Posterior cingulate gyrus (tissue), 11 donors: ENCODE measurements at regions of chr1 and their contacts with region 1.

Region 1: DNA sequence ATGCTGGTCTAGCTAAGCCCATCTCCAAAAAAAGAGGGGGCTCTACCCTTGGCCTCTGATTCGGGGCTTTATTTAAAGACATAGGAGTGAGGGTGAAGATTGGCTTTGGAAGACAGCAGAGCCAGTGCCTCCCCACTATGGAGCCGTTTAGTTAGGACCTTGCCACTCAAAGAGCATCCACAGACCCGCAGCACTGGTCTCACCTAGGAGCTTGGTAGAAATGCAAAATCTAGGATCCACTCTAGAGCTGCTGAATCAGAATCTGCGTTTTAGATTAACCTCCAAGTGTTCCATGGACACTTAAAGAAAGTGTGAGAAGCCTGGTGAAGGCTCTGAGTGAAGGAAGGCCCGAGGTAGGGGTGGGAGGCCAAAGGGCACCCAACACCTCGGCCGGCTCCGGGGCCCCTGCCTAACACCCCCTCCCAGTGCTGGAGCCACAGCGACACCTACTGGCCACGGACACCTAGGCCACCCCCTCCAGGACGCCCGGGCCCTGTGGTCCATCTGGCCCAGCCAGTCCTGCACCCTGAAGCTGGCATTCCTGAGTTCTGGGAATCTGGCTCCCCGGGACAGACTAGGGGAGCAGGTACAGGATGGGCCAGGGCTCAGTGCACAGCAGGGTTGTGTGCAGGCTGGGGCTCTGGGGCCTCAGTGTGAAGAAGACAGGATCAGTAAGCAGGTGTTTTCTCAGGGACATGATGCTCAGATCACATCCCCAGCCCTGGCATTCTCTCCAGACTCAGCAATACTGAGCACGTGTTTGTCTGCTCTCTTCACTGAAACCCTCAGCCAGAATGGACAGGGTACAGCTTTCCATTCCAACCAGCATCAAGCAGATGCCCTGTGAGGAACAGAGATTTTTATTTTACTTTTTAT is 79.2 kb downstream of the TMEM53 start:
- DNase-seq: peak; percentile 63 to 97 (median 89)

Region 2: GRCh38 chr1:44002606-44003157 is 592.4 kb before region 1 on chr1:
- intact Hi-C with region 1: no loop called
- DNase-seq: no peak

Region 3: DNA sequence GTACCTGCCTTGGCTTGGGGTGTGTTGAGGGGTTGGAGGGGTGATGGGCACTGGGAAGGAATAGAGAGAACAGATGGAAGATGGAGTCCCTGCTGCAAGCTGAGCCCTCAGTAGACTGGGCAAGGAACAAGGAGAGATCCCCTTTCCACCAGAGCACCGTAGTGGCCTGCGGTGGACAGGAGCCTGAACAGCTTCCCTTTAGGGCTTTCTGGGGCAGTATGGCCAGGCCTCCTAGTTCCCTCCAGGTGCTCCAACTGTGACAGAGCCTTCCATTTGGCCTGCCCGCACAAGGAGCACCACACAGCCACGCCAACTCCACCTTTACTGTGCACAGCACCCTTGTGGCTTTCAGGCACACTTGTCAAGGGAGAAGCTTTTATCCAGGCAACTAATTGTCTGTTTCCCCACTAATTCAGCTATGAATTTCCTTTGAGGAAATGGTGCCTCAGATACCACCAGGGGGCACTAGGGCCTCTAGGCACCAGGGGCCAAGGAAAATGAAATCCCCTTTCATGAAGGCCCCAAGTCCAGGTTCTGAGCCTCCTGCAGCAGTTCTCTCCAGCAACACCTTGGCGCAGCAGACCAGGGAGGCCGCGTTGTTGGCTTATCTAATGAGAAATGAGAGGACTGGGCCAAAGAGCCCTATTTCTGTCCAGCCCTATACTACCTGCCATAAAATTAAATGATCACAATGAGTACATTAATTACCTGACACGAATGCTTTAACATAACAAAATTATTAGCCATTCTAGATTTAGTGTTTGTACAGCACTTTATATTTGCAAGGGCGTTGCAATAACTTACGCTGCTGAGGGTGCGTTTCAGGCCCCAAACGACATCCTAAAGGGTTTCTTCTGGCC is 217.0 kb before region 1 on chr1:
- intact Hi-C with region 1: loop called (anchors 2 kb)
- DNase-seq: peak in 7 of 10 donors; percentile 11 to 86 (median 64)

Region 4: GRCh38 chr1:44507490-44508396 is 87.4 kb before region 1 on chr1:
- intact Hi-C with region 1: loop called (anchors 1 kb)
- DNase-seq: peak; percentile 64 to 97 (median 81)